AG04450 (cell line): ENCODE measurements at regions of chr2 and their contacts with region 1.

Region 1: DNA sequence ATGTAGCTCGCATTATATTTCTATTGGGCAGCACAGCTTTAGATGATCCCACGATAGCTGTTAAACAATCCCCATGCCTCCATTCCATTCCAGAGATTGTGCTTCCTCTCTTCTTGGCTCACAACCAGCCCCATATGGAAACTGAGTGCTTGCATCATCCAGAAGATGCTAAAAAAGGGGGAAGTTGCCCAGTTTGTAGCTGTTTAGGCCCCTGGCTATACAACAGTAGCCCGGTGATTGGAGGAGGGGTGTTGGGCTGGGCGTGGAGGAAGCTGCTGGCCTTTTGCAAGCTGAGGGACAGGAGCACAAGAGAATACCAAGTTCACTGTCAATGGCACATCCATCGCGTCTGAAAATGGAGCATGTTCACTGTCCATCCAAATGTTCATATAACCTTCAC is 360.2 kb downstream of the ALK start:
- DNase-seq: no peak
- H3K4me3 ChIP-seq: no peak overlapping the region
- H3K27ac ChIP-seq: no peak overlapping the region
- H3K27me3 ChIP-seq: no peaks in the 10 kb centered on the region
- CTCF ChIP-seq: no peak

Region 2: DNA sequence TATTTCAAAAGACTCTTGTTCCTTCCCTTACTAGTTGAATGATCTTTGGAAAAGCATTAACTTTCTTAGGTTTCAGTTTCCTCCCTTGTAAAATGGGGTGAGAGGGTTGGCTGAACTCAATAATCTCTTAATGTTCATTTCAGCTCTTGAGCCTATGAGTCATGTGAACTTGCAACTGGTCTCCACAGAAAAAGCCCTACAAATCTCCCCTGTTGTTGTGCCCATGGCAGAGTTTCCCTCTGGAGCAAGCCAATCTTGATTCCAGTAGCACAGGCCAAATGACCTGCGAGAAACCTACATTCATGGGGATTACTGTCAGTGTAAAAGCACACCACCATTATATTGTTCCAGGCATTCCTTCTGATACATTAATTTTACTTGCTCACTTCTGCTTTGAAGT is 28.7 kb before region 1 on chr2:
- CTCF ChIA-PET with region 1: no interaction called
- POLR2A ChIA-PET with region 1: no interaction called
- DNase-seq: no peak
- H3K4me3 ChIP-seq: no peak overlapping the region
- H3K27ac ChIP-seq: no peak overlapping the region
- H3K27me3 ChIP-seq: no peaks in the 10 kb centered on the region
- CTCF ChIP-seq: no peak

Region 3: DNA sequence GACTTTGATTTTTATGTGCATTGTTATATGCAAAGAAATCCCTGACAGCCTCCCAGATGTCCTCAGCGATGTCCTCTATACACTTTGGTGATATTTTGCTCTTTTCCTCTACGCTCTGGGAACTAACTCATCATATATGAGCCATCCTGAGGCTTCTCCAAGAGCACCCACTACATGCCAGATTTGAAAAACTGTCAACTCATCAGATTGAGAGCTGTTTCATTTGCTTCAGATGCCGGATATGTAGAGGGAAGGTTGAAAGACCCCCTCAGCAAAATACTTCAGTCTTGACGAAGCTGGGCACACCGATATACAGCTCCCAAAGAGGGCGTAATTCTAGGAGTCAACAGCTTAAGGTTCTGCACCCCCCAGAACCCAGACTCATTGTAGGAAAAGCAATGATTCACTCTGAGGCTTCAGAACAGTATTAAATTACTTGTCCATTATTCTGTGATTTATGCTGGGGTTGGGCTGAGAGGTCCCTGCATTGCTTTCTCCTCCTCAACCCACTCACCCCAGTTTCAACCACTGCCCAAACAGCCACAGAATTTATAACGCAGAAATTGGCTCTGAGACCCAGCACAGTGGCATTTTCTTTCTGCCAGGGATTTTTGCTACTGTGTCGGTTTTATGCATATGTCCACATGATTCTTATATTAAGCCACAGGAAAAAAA is 18.5 kb after region 1 on chr2:
- CTCF ChIA-PET with region 1: interaction called, 12 read pairs
- POLR2A ChIA-PET with region 1: no interaction called
- DNase-seq: no peak
- H3K4me3 ChIP-seq: no peak overlapping the region
- H3K27ac ChIP-seq: no peak overlapping the region
- H3K27me3 ChIP-seq: peaks cover 9% of the 10 kb centered on the region
- CTCF ChIP-seq: no peak